ENCODE measurements at regions of chr10 and their contacts with region 1.

Region 1: DNA sequence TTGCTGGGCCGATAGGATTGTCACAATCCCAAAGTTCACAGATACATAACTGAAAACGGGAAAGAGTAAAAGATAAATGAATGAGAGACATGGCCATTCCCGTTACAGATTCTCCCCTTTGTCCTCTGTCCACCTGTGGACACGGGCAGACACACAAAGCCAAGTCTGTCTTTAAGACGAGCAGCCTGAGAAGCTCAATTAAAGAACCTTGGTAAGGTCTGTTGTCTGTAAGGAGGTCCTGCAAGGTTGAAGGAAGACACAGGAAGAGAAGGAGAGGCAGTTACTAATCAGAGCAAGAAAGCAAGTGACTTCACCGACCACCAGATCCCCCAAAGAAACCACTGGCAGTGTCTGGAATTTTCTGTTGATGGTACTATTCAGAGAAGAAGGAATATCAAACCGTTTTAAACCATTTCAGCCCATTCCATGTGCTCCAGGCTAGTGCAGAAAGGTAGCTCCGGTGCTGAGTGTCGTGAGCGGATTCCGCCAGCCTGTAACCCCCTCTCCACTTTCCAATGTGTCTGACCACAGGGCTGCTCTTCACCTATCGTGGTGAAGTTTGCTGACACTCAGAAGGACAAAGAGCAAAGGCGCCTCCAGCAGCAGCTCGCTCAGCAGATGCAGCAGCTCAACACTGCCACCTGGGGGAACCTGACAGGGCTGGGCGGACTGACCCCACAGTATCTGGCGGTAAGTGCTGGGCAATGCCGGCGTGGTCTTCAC is 252.6 kb downstream of the CELF2 start:
- DNase-seq: peak; percentile 84
- H3K4me3 Mint-ChIP-seq: no peak overlapping the region
- H3K27ac Mint-ChIP-seq: no peak overlapping the region
- H3K4me1 Mint-ChIP-seq: no peaks in the 10 kb centered on the region
- H3K27me3 Mint-ChIP-seq: peaks cover 64% of the 10 kb centered on the region
- CTCF ChIP-seq: peak; percentile 90

Region 2: DNA sequence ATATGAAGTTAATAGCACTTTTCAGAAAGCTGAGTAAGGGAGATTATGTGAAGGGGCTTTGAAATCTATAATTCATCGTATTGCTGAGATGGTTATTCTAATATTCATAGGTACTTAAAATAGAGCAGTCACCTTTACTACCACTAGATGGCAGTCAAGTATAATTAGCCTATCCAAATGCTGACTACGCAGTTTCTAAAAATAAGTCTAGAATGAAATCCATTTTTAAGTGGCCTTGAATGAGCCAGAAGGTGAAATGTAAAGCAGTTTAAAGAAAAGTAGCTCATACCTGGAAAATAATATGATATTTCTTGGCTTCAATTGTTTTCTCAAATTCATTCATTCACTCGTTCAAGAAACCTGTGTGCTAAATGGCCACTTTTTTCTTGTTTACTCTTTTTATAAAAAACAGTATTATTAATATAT is 1938.7 kb before region 1 on chr10:
- CTCF ChIA-PET with region 1: no interaction called
- intact Hi-C with region 1: loop called (anchors 2 kb)
- DNase-seq: no peak
- H3K4me3 Mint-ChIP-seq: no peak overlapping the region
- H3K27ac Mint-ChIP-seq: no peak overlapping the region
- H3K4me1 Mint-ChIP-seq: no peaks in the 10 kb centered on the region
- H3K27me3 Mint-ChIP-seq: peaks cover 32% of the 10 kb centered on the region
- CTCF ChIP-seq: peak; percentile 52

Region 3: DNA sequence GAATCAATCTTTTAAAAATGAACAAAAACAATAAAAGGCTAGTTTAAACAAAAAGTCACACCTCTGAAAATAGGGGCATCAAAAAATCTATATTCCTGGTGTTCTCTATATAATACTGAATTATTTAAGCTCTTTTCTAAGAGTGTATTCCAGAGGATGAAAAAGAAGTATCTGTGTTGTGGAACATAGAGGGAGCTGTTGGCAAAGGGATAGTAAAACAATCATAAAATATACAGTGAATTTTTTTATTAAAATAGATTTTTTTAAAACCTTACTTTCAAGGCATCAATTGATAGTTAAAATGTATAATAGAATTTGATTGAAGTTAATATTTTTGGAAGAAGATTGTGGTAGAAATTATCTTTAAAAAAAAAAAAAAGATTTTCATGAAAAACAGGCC is 1661.7 kb before region 1 on chr10:
- CTCF ChIA-PET with region 1: no interaction called
- intact Hi-C with region 1: loop called (anchors 5 kb)
- DNase-seq: no peak
- H3K4me3 Mint-ChIP-seq: no peak overlapping the region
- H3K27ac Mint-ChIP-seq: no peak overlapping the region
- H3K4me1 Mint-ChIP-seq: no peaks in the 10 kb centered on the region
- H3K27me3 Mint-ChIP-seq: no peaks in the 10 kb centered on the region
- CTCF ChIP-seq: no peak

Region 4: GRCh38 chr10:11009471-11010308 is 260.6 kb before region 1 on chr10:
- CTCF ChIA-PET with region 1: no interaction called
- intact Hi-C with region 1: no loop called
- DNase-seq: no peak
- H3K4me3 Mint-ChIP-seq: no peak overlapping the region
- H3K27ac Mint-ChIP-seq: no peak overlapping the region
- H3K4me1 Mint-ChIP-seq: no peaks in the 10 kb centered on the region
- H3K27me3 Mint-ChIP-seq: peaks cover 16% of the 10 kb centered on the region
- CTCF ChIP-seq: no peak